Motor neuron (in vitro differentiated cells): ENCODE measurements at regions of chr3 and their contacts with region 1.

Region 1: GRCh38 chr3:102229062-102229655 is 205.7 kb upstream of the ZPLD1 start:
- ATAC-seq: peak; percentile 61 to 84 (median 80)
- H3K4me3 ChIP-seq: no peak overlapping the region
- H3K27ac ChIP-seq: no peak overlapping the region
- H3K4me1 ChIP-seq: peaks cover 0 to 11% of the 10 kb centered on the region in 2 donors

Region 2: DNA sequence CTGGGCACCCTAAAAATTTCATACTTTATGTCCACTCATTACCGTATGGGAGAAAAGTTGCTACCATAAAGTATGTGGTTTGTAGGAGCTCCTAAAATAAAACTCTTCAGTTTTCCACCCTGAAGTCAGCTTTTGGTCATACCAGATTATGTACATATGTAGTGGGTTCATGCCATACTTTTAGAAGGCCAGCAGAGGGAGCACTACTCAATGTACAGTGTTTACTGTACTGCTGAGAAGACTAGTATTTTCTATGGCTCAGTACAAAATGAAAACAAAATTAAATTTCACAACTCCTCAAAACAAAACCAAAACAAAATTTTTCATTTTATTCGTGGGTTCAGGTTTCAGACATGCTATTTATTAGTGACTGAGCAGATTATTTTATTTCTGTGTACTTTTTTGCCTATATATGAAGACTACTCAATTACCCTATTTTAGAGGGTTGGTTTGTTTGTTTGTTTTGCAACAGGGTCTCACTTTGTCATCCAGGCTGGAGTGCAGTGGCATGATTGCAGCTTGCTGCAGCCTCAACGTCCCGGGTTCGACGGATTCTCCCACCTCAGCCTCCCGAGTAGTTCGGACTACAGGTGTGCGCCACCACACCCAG is 425.9 kb before region 1 on chr3:
- in situ Hi-C with region 1: loop called in 4 of 9 experiments (anchors 10 to 25 kb)
- ATAC-seq: peak; percentile 65 to 100 (median 91)
- H3K4me3 ChIP-seq: no peak overlapping the region
- H3K27ac ChIP-seq: no peak overlapping the region
- H3K4me1 ChIP-seq: no peaks in the 10 kb centered on the region

Region 3: DNA sequence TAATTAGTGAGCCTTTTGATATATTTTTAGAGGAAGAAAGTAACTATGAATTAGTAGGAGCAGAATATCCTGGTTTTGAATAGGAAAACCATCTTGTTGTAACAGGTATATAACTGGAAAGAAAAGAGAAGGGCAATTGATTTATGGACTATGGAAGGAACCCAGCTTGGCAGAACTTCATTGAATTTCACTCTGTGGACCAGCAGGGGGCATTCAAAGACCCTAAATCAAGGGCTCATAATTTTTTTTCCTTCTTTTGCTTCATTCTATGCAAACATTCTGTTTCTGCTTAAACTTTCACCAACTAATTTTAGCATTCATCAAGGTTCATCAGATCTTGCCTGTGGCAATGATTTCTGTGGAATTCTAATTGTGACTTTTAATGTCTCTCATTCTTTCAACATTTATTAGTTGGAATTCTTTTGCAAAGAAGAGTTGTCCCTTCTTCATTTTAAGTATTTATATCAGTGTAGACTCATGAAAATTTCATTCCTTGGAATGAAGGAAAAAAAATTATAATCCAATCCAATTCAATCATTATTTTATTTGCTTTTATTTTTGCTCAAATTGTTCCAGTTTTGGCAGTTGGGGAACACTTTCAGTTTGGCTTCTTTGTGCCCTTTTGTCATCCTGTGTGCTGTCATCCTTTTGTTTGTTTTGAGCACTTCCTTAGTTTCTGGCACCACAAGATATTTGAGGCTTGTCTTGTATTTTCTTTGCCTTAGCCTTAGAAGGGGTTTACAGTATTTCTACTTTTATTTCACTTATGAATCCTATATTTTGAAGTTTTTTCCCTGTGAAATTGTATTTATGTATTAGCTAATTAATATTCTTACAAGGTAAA is 419.8 kb before region 1 on chr3:
- in situ Hi-C with region 1: loop called in 6 of 9 experiments (anchors 5 to 25 kb)
- ATAC-seq: peak in 3 of 8 experiments; percentile 35 to 54 (median 42)
- H3K4me3 ChIP-seq: no peak overlapping the region
- H3K27ac ChIP-seq: no peak overlapping the region
- H3K4me1 ChIP-seq: peaks cover 0 to 3% of the 10 kb centered on the region in 2 donors

Region 4: GRCh38 chr3:102536456-102536855 is 307.3 kb after region 1 on chr3:
- in situ Hi-C with region 1: loop called in 8 of 9 experiments (anchors 5 to 25 kb)
- ATAC-seq: peak; percentile 47 to 70 (median 56)
- H3K4me3 ChIP-seq: no peak overlapping the region
- H3K27ac ChIP-seq: no peak overlapping the region
- H3K4me1 ChIP-seq: no peaks in the 10 kb centered on the region

Region 5: DNA sequence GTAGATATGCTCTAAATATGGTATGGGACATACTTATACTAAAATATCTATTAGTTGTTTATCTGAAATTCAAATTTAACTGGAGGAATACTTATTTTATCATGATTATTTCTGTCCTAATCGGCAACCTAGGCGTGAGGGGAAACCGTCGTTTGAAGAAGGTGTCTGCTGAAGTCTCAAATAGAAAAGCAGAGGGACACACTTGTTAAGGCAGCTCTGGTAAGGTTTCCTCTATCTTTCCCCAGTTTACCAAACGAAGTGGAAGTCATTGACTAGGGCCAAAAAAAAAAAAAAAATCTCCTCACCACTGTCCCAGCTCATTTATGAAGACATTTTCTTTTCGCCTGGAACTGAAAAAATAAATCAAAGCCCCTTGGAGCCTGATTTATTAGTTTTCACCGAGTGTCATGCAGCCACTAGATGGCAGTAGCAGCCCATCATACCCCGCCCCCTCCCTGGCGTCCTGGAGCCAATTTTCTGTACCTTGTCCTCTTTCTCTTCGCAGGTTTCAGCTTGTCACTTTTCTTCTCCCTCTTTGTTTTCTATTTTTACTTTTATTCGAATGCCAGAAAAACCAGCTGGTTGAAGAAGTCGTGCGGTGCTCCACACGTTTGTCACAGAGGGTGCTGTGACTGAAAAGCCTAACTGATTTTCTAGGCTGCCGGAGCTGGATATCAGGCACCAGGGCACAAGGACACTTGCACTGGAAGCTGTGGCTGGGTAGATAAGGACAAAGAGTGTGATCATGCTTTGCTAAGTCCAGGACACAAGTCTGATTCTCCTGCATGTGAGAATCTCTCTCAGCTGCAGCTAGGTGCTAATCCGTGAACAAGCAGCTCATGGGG is 444.3 kb after region 1 on chr3:
- in situ Hi-C with region 1: loop called in 1 of 9 experiments (anchors 25 kb)
- ATAC-seq: peak; percentile 61 to 88 (median 78)
- H3K4me3 ChIP-seq: peak overlapping the region in 2 of 5 donors; percentile 13 to 22
- H3K27ac ChIP-seq: no peak overlapping the region
- H3K4me1 ChIP-seq: peaks cover 12 to 32% of the 10 kb centered on the region in 2 donors